ENCODE measurements at regions of chr15 and their contacts with region 1.

Region 1: GRCh38 chr15:76057332-76058000 is 2.3 kb upstream of the TMEM266 start:
- DNase-seq: no peak
- H3K4me3 ChIP-seq: peak overlapping the region in 1 of 4 donors; percentile 52
- H3K27ac ChIP-seq: no peak overlapping the region
- H3K4me1 ChIP-seq: peaks cover 12 to 30% (median 18%) of the 10 kb centered on the region in 3 donors
- H3K27me3 ChIP-seq: peaks cover 0 to 62% (median 0%) of the 10 kb centered on the region in 4 donors
- CTCF ChIP-seq: peak; percentile 45 to 75 (median 64)
- POLR2A ChIP-seq: no peak

Region 2: DNA sequence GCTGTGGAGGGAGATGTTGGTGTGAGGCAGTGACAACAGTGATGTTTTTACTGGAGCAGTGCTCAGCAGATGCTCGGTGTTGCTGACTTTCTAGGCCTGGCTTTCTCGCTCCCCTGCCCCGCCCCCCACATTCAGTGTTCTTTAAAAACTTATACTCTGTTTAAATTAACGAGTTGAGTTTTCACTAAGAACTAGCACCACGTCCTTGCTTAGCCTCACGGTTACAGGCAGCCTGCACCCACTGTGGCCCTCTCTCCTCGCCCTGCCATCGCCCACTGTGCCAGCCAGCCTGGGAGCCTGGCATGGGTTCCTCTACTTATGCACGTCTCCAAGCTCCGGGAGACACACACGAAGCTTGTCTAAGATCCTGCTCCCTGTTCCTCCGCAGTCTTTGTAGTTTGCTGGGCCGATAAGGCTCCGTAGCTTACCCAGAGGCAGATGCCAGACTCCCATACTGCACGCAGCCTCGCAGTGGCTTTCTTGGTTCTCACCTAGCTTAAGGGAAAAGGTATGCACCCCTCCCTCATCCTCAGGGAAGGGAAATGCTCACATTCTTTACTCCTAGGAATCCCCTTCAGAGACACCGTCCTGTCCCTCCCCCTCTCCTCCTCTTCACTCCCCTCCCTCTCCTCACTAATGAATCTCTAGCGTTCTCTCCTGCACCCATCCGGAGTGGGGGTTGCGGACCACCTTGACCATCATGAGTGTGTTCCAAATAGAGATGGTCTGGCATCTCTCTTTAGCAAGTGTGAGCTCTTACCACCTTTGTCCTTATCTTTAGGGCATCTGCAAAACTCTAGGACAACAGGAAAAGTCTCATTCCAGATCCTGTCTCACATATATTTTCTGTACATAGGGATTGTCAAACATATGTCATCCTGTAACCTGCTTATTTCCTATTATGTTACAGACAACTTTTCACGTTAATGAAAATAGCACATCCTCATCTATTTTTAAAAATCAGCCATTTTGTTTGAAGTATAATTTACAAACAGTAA is 58.7 kb after region 1 on chr15:
- intact Hi-C with region 1: no loop called
- DNase-seq: no peak
- H3K4me3 ChIP-seq: no peak overlapping the region
- H3K27ac ChIP-seq: no peak overlapping the region
- H3K4me1 ChIP-seq: no peaks in the 10 kb centered on the region
- H3K27me3 ChIP-seq: peaks cover 0 to 6% (median 0%) of the 10 kb centered on the region in 4 donors
- CTCF ChIP-seq: no peak
- POLR2A ChIP-seq: no peak

Region 3: GRCh38 chr15:76150971-76151598 is 93.6 kb after region 1 on chr15:
- intact Hi-C with region 1: loop called (anchors 5 kb)
- DNase-seq: no peak
- H3K4me3 ChIP-seq: peak overlapping the region in 1 of 4 donors; percentile 39
- H3K27ac ChIP-seq: peak overlapping the region; percentile 25 to 72 (median 56)
- H3K4me1 ChIP-seq: peaks cover 9 to 29% (median 27%) of the 10 kb centered on the region in 3 donors
- H3K27me3 ChIP-seq: no peaks in the 10 kb centered on the region
- CTCF ChIP-seq: peak; percentile 86 to 94 (median 88)
- POLR2A ChIP-seq: no peak

Region 4: GRCh38 chr15:76267077-76267476 is 209.6 kb after region 1 on chr15:
- intact Hi-C with region 1: no loop called
- DNase-seq: no peak
- H3K4me3 ChIP-seq: no peak overlapping the region
- H3K27ac ChIP-seq: no peak overlapping the region
- H3K4me1 ChIP-seq: peaks cover 0 to 16% (median 0%) of the 10 kb centered on the region in 3 donors
- H3K27me3 ChIP-seq: no peaks in the 10 kb centered on the region
- CTCF ChIP-seq: no peak
- POLR2A ChIP-seq: no peak

Measured in esophagus squamous epithelium (tissue), 5 donors.